Psoas muscle (tissue), 8 donors: ENCODE measurements at regions of chr6 and their contacts with region 1.

Region 1: DNA sequence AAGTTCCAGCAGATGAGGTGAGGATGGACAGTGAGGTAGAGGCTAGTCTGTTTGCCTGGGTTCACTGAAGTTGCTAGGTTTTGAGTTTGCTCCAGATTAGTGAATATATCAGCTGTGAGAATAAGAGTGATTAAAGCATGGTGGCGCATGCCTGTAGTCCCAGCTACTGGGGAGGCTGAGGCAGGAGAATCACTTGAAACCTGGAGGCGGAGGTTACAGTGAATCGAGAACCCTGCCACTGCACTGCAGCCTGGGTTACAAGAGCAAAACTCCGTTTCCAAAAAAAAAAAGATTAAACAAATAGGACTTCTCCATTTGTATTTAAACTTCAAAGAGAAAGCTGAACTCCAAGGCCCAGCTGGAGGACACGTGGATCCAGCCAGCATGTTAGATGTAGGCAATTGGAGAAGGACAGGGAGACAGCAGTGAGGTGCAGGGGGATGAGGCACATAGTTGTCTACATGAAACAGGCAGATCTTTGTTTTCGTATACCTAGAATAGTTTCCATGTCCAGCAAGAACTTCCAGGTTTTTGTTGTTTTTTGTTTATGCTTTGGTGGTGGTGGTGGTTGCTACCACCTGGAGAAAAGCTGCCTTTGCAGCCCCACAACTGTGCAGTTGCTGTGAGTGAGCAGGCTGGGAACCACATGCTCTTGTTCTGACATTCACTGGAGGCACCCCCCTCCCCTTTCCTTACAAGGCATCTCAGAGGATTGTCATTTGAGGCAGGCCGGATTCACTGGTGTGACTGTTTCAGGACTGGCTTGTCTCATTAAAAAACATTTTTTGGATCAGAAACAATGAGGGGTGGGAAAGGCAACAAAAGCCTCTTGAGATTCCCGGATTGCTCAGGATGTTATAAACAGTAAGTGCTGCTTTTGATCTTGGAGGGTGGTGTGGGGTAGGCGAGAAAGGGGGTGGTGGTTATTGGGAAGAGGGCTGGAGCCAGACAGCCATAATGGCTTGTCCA is 72.3 kb downstream of the JARID2 start:
- DNase-seq: no peak
- ATAC-seq: no peak
- H3K4me3 ChIP-seq: no peak overlapping the region
- H3K27ac ChIP-seq: no peak overlapping the region
- H3K4me1 ChIP-seq: peaks cover 36% of the 10 kb centered on the region
- H3K27me3 ChIP-seq: no peaks in the 10 kb centered on the region
- CTCF ChIP-seq: no peak

Region 2: GRCh38 chr6:15248451-15249370 is 69.5 kb before region 1 on chr6:
- intact Hi-C with region 1: no loop called
- DNase-seq: peak; percentile 94 to 96
- ATAC-seq: peak; percentile 54 to 65 (median 58)
- H3K4me3 ChIP-seq: peak overlapping the region; percentile 88
- H3K27ac ChIP-seq: peak overlapping the region; percentile 98
- H3K4me1 ChIP-seq: peaks cover 20% of the 10 kb centered on the region
- H3K27me3 ChIP-seq: no peaks in the 10 kb centered on the region
- CTCF ChIP-seq: no peak

Region 3: DNA sequence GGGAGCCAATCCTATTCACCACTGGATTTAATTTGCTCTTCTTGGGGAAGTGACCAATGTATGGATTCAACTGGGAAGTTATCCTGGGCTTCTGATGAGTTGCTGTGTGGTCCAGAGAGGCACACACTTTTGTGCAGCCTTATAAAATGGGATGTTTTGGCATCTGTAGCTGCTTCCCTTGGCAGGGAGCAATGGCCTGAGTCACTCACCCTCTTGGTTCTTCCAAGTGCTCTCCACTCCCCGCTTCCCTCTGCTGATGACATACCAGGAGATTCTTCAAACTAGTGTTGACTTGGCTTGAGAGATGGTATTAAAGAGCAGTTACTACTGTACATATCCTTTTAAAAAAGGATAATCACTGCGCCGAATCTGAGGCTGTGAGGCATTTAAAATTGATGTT is 33.4 kb after region 1 on chr6:
- intact Hi-C with region 1: loop called in 1 of 2 experiments (anchors 5 kb)
- DNase-seq: peak; percentile 53 to 75
- ATAC-seq: peak; percentile 90 to 95 (median 92)
- H3K4me3 ChIP-seq: no peak overlapping the region
- H3K27ac ChIP-seq: peak overlapping the region; percentile 68
- H3K4me1 ChIP-seq: peaks cover 51% of the 10 kb centered on the region
- H3K27me3 ChIP-seq: no peaks in the 10 kb centered on the region
- CTCF ChIP-seq: no peak